GM13976 (cell line): ENCODE measurements at regions of chr14 and their contacts with region 1.

Region 1: GRCh38 chr14:24806061-24806678 is 172.2 kb upstream of the GZMB start:
- DNase-seq: peak; percentile 30
- CTCF ChIP-seq: peak; percentile 74

Region 2: DNA sequence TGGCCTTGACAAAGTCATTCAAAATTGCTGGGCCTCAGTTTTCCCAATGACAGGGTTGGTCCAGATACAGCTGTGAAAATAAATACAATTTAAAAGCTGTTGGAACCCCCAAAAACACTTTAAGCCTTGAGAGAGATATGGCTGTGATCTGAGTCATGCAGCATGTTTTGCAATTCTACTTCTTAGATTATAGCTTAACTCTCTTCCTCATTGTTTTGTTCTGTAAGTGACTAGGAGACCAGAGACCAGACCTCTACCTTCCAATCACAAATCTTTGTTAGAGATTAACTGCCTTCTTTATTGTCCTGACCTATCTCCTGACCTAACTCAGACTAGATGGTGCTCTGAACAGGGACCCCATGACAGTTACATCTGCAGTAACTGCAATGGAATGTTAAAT is 45.7 kb after region 1 on chr14:
- in situ Hi-C with region 1: no loop called
- DNase-seq: no peak
- CTCF ChIP-seq: no peak

Region 3: DNA sequence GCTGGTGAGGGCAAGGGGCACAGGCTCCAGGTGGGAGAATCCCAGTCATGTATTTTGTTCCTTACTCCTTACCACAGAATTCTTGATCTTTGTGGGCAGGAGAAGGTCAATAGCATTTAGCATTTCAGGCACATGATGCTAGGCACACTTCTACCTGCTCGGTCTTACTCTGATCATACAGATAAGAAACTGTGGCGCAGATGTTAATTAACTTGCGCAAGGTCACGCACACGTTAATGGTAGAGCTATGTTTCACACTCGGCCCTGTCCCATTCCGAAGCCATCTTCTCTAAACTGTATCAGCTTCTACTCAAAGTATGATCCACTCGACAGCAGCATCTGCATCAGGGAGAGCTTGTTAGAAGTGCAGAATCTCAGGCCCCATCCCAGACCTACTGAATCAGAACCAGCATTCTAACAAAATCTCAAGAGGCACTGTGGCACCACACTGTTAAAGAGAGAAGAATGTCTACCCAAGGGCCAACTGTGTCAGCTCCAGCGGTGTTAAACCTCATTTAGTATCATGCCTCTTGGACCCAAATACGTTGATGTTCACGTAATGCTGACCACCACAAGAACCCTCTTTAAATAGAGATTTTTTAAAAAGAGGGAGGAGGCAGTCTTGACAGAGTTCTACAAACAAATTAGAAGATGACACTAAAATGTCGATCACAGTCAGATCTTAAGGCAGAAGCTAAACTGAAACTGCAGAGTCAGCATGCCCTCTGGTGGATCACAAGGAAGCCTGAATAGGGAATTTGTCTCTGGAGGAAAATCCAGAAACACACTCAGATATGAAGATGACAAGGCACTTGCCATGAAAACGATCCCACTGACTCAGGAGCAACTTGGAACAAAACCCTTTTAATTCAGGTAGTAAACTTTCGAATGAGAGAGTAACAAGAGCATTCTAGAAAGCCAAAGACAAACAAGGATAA is 236.5 kb after region 1 on chr14:
- in situ Hi-C with region 1: no loop called
- DNase-seq: no peak
- CTCF ChIP-seq: no peak

Region 4: GRCh38 chr14:25132732-25133422 is 326.7 kb after region 1 on chr14:
- in situ Hi-C with region 1: loop called (anchors 25 kb)
- DNase-seq: peak; percentile 68
- CTCF ChIP-seq: peak; percentile 87

Region 5: DNA sequence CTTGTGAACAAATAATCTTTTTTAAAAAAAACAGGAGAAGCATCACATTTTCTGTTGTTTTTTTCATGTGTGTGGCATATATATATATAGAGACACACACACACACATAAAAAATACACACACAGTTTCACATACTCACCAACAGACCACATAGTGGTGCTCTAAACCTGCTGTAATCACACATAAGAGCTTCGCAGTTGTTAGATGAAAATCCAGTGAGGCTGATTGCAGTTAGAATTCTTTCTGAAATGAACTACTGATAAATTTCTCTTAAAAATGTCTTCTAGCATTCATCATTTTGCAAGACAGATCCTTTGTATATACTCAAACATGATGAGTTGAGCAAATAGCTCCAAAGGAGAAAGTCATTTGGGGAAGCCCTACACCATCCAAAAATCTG is 678.1 kb after region 1 on chr14:
- in situ Hi-C with region 1: no loop called
- DNase-seq: no peak
- CTCF ChIP-seq: no peak